Spleen (tissue), 13 donors: ENCODE measurements at regions of chr3 and their contacts with region 1.

Region 1: GRCh38 chr3:146326670-146327543 is 76.0 kb upstream of the PLSCR4 start:
- DNase-seq: no peak
- H3K4me3 ChIP-seq: no peak overlapping the region
- H3K27ac ChIP-seq: no peak overlapping the region
- H3K4me1 ChIP-seq: peaks cover 0 to 2% (median 0%) of the 10 kb centered on the region in 6 donors
- H3K27me3 ChIP-seq: no peaks in the 10 kb centered on the region
- CTCF ChIP-seq: peak in 9 of 11 experiments; percentile 5 to 55 (median 43)
- POLR2A ChIP-seq: no peak

Region 2: DNA sequence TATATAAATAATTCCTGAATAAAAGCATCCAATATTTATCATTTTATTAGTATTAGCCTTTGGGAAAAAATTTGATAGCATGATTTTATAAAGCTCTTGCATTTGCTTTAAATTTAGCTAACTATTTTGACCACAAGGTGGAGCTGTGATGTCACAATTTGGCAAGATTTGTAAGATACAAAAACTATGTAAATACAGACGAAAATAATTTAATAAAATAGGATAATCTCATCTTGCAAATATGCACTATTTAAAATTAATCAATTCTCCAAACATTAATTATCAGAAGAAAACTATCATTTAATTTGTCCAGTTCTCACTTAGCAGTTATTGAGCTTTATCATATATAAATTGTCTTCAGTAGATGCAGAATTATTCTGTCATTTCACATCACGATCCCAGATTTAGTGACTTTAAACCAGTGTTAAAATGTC is 261.3 kb before region 1 on chr3:
- intact Hi-C with region 1: loop called (anchors 5 kb)
- DNase-seq: no peak
- H3K4me3 ChIP-seq: no peak overlapping the region
- H3K27ac ChIP-seq: no peak overlapping the region
- H3K4me1 ChIP-seq: no peaks in the 10 kb centered on the region
- H3K27me3 ChIP-seq: no peaks in the 10 kb centered on the region
- CTCF ChIP-seq: peak in 10 of 11 experiments; percentile 10 to 72 (median 48)
- POLR2A ChIP-seq: no peak

Region 3: GRCh38 chr3:146218880-146219866 is 107.7 kb before region 1 on chr3:
- intact Hi-C with region 1: loop called (anchors 10 kb)
- DNase-seq: no peak
- H3K4me3 ChIP-seq: no peak overlapping the region
- H3K27ac ChIP-seq: no peak overlapping the region
- H3K4me1 ChIP-seq: peaks cover 0 to 21% (median 7%) of the 10 kb centered on the region in 6 donors
- H3K27me3 ChIP-seq: no peaks in the 10 kb centered on the region
- CTCF ChIP-seq: peak; percentile 4 to 72 (median 55)
- POLR2A ChIP-seq: no peak

Region 4: GRCh38 chr3:146374146-146374545 is 47.2 kb after region 1 on chr3:
- intact Hi-C with region 1: no loop called
- DNase-seq: no peak
- H3K4me3 ChIP-seq: no peak overlapping the region
- H3K27ac ChIP-seq: no peak overlapping the region
- H3K4me1 ChIP-seq: no peaks in the 10 kb centered on the region
- H3K27me3 ChIP-seq: no peaks in the 10 kb centered on the region
- CTCF ChIP-seq: no peak
- POLR2A ChIP-seq: no peak